ENCODE measurements at regions of chr6 and their contacts with region 1.

Region 1: GRCh38 chr6:13614926-13615798 is at the start of gene NOL7:
- DNase-seq: peak; percentile 91
- H3K4me3 ChIP-seq: peak within 1 kb of the TSS; percentile 93
- CTCF ChIP-seq: peak; percentile 96

Region 2: GRCh38 chr6:13328076-13328874 is 286.9 kb before region 1 on chr6 and contains the start of gene TBC1D7:
- CTCF ChIA-PET with region 1: interaction called, 18 read pairs
- POLR2A ChIA-PET with region 1: interaction called, 6 read pairs
- DNase-seq: peak; percentile 19
- H3K4me3 ChIP-seq: peak within 1 kb of the TSS; percentile 88
- CTCF ChIP-seq: no peak

Region 3: GRCh38 chr6:13437218-13437996 is 177.8 kb before region 1 on chr6:
- CTCF ChIA-PET with region 1: no interaction called
- POLR2A ChIA-PET with region 1: no interaction called
- DNase-seq: no peak
- H3K4me3 ChIP-seq: no peak overlapping the region
- CTCF ChIP-seq: no peak

Region 4: GRCh38 chr6:13574149-13574570 is 41.0 kb before region 1 on chr6:
- CTCF ChIA-PET with region 1: interaction called, 16 read pairs
- POLR2A ChIA-PET with region 1: interaction called, 9 read pairs
- DNase-seq: no peak
- H3K4me3 ChIP-seq: peak overlapping the region; percentile 80
- CTCF ChIP-seq: peak; percentile 43

Region 5: DNA sequence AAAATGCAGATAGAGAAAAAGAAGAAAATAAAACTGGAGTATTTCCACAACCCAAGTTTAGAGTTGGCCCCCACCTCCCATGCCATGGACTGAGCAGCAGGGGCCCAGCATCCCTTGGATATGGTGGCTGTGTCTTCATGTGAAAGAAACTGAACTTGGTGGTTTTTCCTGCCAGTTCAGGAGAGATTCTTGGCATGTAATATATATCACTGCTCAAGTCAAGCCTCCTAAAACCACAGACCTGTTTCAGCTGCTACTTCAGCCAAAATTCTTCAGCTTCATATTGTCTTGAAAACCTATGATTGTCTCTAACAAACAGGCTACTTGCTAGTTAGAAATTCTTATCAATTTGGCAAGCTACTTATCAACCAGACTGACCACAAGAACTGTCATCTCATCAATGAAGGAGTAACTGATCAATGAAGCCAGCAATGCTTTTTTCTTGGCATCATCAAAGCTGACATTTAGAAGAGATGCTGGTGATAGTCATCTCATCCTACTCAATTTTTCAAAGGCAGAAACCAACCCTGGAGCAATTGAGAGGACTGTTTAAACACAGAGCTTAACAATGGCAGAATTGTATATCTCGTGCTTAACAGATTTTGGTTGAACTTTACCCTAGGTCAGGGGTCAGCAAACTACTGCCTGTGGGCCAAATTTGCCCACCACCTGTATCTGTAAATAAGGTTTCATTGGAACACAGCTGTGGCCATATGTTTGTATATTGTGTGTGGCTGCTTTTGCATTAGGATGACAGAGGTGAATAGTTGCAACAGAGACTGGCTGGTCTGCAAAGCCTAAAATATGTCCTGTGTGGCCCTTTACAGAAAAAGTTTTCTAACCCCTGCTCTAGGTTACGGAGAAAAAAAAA is 10.4 kb before region 1 on chr6:
- CTCF ChIA-PET with region 1: interaction called, 19 read pairs
- POLR2A ChIA-PET with region 1: interaction called, 6 read pairs
- DNase-seq: no peak
- H3K4me3 ChIP-seq: no peak overlapping the region
- CTCF ChIP-seq: no peak

Region 6: DNA sequence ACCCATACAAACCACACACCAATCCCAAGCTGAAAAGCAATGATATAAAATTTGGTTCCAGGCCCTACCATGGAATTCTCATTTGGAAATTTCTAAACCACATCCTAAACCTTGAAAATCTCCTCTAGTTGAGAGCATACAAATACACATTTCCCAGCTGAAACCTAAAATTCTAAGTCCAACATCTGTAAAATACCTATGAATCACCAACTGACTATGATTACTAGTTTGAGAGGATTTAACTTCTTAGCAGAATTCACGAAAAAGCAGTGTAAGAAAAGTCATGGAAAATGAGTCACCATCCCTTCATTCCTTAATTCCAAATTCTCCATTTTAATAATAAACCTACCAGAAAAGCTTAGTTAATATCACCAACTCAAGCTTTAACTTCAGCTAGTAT is 81.1 kb after region 1 on chr6:
- CTCF ChIA-PET with region 1: interaction called, 12 read pairs
- POLR2A ChIA-PET with region 1: no interaction called
- DNase-seq: peak; percentile 65
- H3K4me3 ChIP-seq: no peak overlapping the region
- CTCF ChIP-seq: no peak

Region 7: DNA sequence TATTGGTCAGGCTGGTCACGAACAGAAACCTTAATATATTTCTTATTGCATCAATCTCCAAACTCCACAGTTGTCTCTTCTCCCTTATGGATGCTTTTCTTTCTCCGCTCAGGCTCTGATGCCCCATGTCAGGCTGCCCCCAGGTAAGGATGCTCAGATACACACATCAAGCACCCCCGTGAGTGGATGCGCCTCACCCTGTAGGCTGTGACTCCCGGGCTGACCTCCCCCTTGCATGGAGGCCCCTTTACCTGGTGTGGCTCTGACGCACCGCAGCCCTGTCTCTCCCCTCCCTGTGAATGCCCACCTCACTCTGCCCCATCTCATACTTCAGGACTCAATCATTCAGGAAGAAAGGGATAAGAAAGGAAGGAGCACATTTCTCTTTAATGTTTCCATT is 115.5 kb after region 1 on chr6:
- CTCF ChIA-PET with region 1: interaction called, 10 read pairs
- POLR2A ChIA-PET with region 1: no interaction called
- DNase-seq: no peak
- H3K4me3 ChIP-seq: no peak overlapping the region
- CTCF ChIP-seq: no peak